H1 (cell line): ENCODE measurements at regions of chr10 and their contacts with region 1.

Region 1: DNA sequence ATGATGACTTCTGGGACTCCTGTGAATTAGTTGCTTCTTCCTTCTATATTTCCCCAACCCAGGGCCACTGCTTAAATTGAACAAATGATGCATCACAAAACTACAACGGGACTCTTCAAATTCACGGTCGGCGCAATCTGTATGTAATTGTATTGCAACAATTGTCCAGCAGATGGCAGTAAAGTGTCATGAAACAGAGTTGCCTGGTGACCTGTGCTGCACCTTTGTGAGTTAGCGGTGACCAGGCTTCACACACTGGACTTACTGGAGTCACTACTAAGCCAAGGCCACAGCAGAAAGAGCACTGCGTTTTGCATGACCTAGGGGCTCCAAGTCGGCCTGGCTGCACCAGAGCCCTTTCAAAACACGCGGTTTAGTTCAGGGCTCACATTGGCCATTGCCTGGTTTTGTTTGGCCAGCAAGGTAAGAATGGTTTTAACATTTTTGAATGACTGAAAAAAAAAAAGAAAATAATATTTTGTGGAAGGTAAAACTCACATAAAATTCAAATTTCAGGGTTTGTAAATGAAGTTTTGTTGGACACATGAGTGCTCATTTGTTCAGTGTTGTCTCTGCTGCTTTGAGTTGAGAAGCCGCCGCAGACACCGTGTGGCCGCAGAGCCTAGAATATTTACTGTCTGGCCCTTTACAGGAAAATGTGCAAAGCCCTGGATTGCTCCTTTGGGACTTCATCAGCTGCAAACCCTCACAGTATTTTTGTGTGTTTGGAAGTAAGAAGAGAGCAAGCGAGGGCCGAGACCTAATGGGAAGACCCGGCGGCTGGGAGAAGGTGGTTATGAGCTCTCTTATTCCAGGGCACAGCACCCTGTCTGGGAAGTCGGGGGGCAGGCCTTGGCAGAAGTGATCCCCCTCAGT is 23.2 kb upstream of the ZNF32 start:
- DNase-seq: peak in 1 of 2 experiments; percentile 63
- H3K4me3 ChIP-seq: no peak overlapping the region
- H3K27ac ChIP-seq: no peak overlapping the region
- H3K4me1 ChIP-seq: peaks cover 0 to 6% (median 0%) of the 10 kb centered on the region in 4 experiments; a peak in 1 of 7 replicates
- H3K27me3 ChIP-seq: peaks cover 0 to 23% (median 3%) of the 10 kb centered on the region in 4 experiments; a peak in 5 of 7 replicates
- CTCF ChIP-seq: peak in 2 of 3 experiments; percentile 78; a peak in 3 of 4 replicates
- EP300 ChIP-seq: no peak
- POLR2A ChIP-seq: no peak
- RAD21 ChIP-seq: peak; percentile 95 to 99

Region 2: GRCh38 chr10:43683451-43684291 is 11.8 kb after region 1 on chr10:
- CTCF ChIA-PET with region 1: interaction called, 30 read pairs
- POLR2A ChIA-PET with region 1: interaction called, 4 read pairs
- DNase-seq: peak in 1 of 2 experiments; percentile 72
- H3K4me3 ChIP-seq: no peak overlapping the region
- H3K27ac ChIP-seq: no peak overlapping the region
- H3K4me1 ChIP-seq: no peaks in the 10 kb centered on the region
- H3K27me3 ChIP-seq: peaks cover 0 to 3% (median 2%) of the 10 kb centered on the region in 4 experiments; a peak in 5 of 7 replicates
- CTCF ChIP-seq: peak; percentile 78 to 87 (median 87)
- EP300 ChIP-seq: no peak
- POLR2A ChIP-seq: no peak
- RAD21 ChIP-seq: peak; percentile 66 to 77

Region 3: DNA sequence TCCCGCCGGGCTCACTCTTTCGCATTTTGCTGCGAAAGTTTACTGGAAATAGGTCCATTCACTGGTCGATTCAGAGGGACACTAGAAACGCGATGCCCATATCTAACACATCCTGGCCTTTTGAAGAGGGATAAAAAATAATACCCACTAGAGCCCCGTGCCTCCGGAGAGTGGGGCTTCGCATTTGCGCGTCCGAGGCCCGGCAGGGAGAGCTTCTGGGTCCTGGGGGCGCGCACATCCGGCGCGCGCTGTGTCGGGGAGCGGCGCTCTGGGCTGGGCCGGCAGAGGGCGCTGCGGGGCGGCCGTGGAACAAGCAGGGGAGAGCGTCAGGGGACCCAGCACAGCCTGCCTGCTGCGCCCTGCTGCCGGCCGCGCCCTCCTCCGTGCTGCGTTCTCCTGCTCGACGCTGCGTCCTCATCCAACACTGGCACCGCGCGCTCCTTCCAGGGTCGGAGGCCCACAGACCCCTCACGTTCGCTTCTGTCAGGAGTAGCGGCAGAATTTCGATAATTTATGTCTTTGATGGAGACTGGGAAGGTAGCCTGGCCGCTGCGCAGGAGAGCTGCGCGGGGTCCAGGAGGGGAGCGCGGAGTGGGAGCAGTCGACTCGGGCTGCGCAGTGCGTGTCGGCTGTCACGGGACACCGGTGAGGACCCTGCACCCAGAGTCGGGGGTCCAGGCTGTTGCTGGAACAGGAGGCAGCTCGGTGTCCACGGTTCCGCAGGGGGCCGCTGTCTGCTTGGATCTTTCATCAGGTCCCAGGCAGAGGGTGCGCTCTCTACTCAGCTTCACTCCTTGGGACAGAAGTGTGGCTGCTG is 18.3 kb after region 1 on chr10:
- CTCF ChIA-PET with region 1: interaction called, 15 read pairs
- POLR2A ChIA-PET with region 1: interaction called, 4 read pairs
- DNase-seq: peak in 1 of 2 experiments; percentile 96
- H3K4me3 ChIP-seq: peak overlapping the region; percentile 43 to 67 (median 62)
- H3K27ac ChIP-seq: no peak overlapping the region
- H3K4me1 ChIP-seq: peaks cover 0 to 3% (median 1%) of the 10 kb centered on the region in 4 experiments; a peak in 4 of 7 replicates
- H3K27me3 ChIP-seq: peaks cover 0 to 39% (median 22%) of the 10 kb centered on the region in 4 experiments; a peak in 6 of 7 replicates
- CTCF ChIP-seq: peak; percentile 84 to 91 (median 87)
- EP300 ChIP-seq: no peak
- POLR2A ChIP-seq: no peak
- RAD21 ChIP-seq: peak; percentile 70 to 85

Region 4: GRCh38 chr10:43824934-43825333 is 153.0 kb after region 1 on chr10:
- CTCF ChIA-PET with region 1: no interaction called
- POLR2A ChIA-PET with region 1: no interaction called
- DNase-seq: no peak
- H3K4me3 ChIP-seq: no peak overlapping the region
- H3K27ac ChIP-seq: no peak overlapping the region
- H3K4me1 ChIP-seq: no peaks in the 10 kb centered on the region
- H3K27me3 ChIP-seq: no peaks in the 10 kb centered on the region
- CTCF ChIP-seq: no peak
- EP300 ChIP-seq: no peak
- POLR2A ChIP-seq: no peak
- RAD21 ChIP-seq: no peak